Activated B cell treated with CpG ODN at 0.5 μM for 24 hours (primary cell): ENCODE measurements at regions of chr6 and their contacts with region 1.

Region 1: DNA sequence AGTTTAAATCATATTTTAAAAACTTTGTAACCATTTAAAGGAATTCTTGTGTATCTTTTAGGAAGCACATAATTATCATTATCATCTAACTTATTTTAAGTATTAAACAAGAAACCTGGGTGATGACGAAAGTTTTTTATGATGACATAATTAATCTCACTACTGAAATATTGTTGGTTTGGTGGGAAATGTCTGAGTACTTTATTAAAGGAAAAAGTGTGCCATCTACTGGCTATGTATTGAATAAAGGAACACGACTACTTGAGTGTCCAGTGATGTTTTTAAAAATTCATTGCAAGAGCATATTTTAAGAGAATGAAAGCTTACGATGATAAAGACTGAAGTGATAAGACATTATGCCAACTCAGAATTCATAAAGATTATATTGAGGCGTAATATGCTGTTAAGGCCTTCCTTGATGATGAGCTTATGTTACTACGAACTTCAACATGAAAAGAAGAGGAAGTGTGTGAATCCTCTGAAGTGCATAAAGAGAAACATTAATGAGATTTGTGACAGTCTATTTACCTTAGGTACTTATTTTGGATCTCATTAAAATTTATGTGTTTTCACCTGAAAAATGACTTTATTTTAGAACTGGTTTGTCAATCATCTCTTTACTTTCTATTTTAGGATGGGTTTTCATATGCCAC is 12.0 kb upstream of the TRMT11 start:
- DNase-seq: no peak
- ATAC-seq: peak; percentile 58
- H3K4me3 Mint-ChIP-seq: no peak overlapping the region
- H3K27ac Mint-ChIP-seq: peak overlapping the region; percentile 5
- H3K4me1 Mint-ChIP-seq: peaks cover 15% of the 10 kb centered on the region
- H3K27me3 Mint-ChIP-seq: no peaks in the 10 kb centered on the region
- CTCF ChIP-seq: no peak

Region 2: GRCh38 chr6:125153391-125154117 is 820.8 kb before region 1 on chr6 and contains the start of gene TPD52L1:
- CTCF ChIA-PET with region 1: no interaction called
- POLR2A ChIA-PET with region 1: no interaction called
- intact Hi-C with region 1: loop called (anchors 10 kb)
- DNase-seq: peak; percentile 23
- ATAC-seq: peak; percentile 76
- H3K4me3 Mint-ChIP-seq: peak within 1 kb of the TSS; percentile 68
- H3K27ac Mint-ChIP-seq: no peak within 1 kb of the TSS
- H3K4me1 Mint-ChIP-seq: peaks cover 11% of the 10 kb centered on the region
- H3K27me3 Mint-ChIP-seq: peaks cover 31% of the 10 kb centered on the region
- CTCF ChIP-seq: no peak
- total RNA-seq, gene TPD52L1: not detected in 2 replicates

Region 3: GRCh38 chr6:125528621-125529041 is 445.7 kb before region 1 on chr6:
- CTCF ChIA-PET with region 1: no interaction called
- POLR2A ChIA-PET with region 1: no interaction called
- intact Hi-C with region 1: loop called (anchors 10 kb)
- DNase-seq: no peak
- ATAC-seq: no peak
- H3K4me3 Mint-ChIP-seq: no peak overlapping the region
- H3K27ac Mint-ChIP-seq: no peak overlapping the region
- H3K4me1 Mint-ChIP-seq: no peaks in the 10 kb centered on the region
- H3K27me3 Mint-ChIP-seq: peaks cover 39% of the 10 kb centered on the region
- CTCF ChIP-seq: no peak

Region 4: DNA sequence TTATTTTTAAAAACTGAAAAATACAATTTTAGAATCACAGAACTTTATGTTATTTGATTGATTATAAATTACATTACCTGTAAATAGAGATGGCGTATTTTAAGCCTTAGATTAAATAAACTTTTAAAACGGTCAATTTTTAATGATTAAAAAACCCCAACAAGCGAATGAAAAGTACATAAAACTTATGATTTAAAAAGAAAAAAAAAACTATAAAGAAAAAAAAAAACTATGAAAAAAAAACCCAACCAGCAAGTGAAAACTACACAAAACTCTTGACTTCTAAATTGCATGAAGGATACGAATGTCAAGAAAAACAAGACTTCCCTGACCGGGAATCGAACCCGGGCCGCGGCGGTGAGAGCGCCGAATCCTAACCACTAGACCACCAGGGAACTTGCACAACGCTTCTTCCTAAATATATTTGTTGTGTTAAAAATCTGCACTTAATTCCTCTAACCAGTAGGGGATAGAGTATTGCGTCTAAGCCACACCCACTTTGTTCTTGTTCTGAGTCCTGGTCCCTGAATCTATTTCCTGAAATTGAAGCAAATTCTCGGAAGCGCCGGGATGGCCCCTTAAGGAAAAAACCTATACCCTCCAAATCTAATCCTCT is 194.3 kb before region 1 on chr6:
- CTCF ChIA-PET with region 1: interaction called, 15 read pairs
- POLR2A ChIA-PET with region 1: interaction called, 8 read pairs
- intact Hi-C with region 1: loop called (anchors 2 kb)
- DNase-seq: peak; percentile 77
- ATAC-seq: peak; percentile 79
- H3K4me3 Mint-ChIP-seq: no peak overlapping the region
- H3K27ac Mint-ChIP-seq: no peak overlapping the region
- H3K4me1 Mint-ChIP-seq: peaks cover 4% of the 10 kb centered on the region
- H3K27me3 Mint-ChIP-seq: no peaks in the 10 kb centered on the region
- CTCF ChIP-seq: no peak

Region 5: DNA sequence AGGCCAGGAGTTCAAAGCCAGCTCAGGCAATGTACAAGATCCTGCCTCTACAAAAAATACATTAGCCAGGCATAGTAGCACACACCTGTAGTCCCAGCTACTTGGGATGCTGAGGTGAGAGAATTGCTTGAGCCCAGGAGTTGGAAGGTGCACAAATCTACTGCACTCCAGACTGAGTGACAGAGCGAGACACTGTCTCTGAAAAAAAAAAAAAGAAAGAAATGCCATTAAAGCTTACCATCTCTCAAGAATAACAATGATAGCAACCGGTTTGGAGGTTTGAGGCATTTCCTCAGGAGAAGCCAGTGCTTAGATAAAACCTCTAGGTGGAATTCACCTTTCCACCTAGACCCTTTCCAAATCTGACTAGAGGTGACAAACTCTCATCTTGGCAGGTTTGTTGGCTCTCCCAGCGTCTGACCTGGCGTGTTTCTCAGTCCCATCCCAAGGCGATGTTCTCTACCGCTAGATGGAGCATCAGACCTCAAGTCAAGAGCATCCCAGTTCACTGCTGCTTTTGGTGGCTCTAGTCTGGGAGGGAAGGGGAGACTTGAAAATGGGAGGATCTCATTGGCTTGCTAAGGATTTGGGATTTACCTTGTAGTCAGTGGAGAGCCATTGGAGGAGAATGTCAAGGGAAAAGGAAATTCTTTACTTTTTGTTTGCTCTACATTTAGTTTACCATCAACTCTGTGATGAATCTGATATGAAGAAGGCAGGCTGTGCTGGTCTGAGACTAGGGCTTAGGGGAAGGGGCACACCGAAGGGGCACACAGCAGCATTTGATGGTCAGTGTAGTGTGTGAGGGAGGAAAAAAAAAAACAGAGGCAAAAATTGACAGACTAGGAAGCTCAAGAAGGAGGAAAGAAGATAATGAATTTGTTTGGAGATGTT is 115.7 kb before region 1 on chr6:
- CTCF ChIA-PET with region 1: interaction called, 6 read pairs
- POLR2A ChIA-PET with region 1: no interaction called
- intact Hi-C with region 1: loop called (anchors 1 kb)
- DNase-seq: no peak
- ATAC-seq: peak; percentile 45
- H3K4me3 Mint-ChIP-seq: no peak overlapping the region
- H3K27ac Mint-ChIP-seq: no peak overlapping the region
- H3K4me1 Mint-ChIP-seq: no peaks in the 10 kb centered on the region
- H3K27me3 Mint-ChIP-seq: no peaks in the 10 kb centered on the region
- CTCF ChIP-seq: no peak

Region 6: DNA sequence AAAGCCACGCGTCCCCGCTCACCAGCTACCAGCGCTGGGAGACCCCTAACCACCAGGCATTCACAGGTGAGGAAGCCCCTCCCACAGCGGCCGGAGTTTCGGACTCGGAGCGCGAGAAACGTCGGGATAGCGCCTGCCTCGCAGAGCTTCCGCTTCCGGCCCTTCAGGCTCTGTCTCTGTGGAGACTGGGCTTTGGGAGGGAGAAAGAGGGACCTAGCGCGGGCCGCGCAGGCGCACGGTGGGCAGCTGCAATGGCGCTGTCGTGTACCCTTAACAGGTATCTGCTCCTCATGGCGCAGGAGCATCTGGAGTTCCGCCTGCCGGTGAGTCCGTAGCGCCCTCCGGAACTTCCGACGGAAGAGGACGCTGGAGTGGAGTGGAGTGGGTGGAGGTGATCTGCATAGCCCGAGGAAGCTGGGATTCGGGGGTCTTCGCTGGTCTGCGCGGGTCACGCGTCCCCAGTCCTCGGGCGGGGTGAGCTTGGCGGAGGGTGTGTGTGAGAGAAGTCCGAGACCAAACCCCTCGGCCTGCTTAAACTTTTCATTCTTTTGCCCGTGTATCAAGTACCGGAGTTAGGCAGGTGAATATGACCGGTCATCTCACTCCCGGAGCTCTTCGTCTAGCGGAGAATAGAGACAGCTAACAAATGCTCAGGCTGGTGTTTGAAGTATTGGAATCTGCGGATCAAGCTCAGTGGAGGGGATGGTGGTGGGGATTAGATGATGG is 12.1 kb after region 1 on chr6 and contains the start of gene TRMT11:
- CTCF ChIA-PET with region 1: interaction called, 14 read pairs
- POLR2A ChIA-PET with region 1: interaction called, 8 read pairs
- intact Hi-C with region 1: no loop called
- DNase-seq: peak; percentile 70
- ATAC-seq: peak; percentile 95
- H3K4me3 Mint-ChIP-seq: peak within 1 kb of the TSS; percentile 25
- H3K27ac Mint-ChIP-seq: no peak within 1 kb of the TSS
- H3K4me1 Mint-ChIP-seq: peaks cover 9% of the 10 kb centered on the region
- H3K27me3 Mint-ChIP-seq: no peaks in the 10 kb centered on the region
- CTCF ChIP-seq: no peak
- total RNA-seq, gene TRMT11: 24.6 and 33.4 TPM in 2 replicates